Panc1 (cell line): ENCODE measurements at regions of chr1 and their contacts with region 1.

Region 1: GRCh38 chr1:159214149-159214760 is 9.6 kb downstream of the ACKR1 start:
- DNase-seq: peak; percentile 42
- ATAC-seq: peak; percentile 83; the same call in 1 of the 2 replicates
- H3K4me3 ChIP-seq: no peak overlapping the region
- H3K27ac ChIP-seq: no peak overlapping the region
- H3K4me1 ChIP-seq: no peaks in the 10 kb centered on the region
- H3K27me3 ChIP-seq: peaks cover 3% of the 10 kb centered on the region
- CTCF ChIP-seq: peak; percentile 96

Region 2: DNA sequence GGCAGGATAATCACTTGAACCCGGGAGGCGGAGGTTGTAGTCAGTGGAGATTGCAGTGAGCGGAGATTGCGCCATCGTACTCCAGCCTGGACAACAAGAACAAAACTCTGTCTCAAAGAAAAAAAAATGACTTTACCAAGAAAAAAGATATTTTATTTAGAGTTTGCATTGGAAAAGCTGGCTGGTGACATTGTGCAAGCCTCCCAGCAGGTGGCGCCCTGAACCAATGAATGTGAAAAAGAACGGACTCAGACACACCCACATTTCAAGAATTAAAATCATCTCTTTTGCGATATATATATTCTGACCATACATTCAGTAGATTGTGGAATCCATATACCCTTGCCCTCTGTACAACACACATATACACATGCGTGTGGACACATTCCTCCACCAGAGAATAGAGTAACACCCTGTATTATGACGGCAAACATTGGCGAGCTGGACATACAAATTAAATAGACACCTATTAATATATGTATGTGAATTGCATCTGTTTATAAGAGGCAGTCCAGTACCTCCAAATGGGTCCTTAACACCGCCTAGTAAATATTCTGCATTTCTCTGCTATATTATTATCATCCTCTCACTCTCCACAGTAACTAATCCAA is 81.9 kb before region 1 on chr1:
- CTCF ChIA-PET with region 1: interaction called, 12 read pairs
- POLR2A ChIA-PET with region 1: interaction called, 3 read pairs
- in situ Hi-C with region 1: no loop called
- intact Hi-C with region 1: loop called (anchors 2 kb)
- DNase-seq: peak; percentile 36
- ATAC-seq: peak; percentile 82
- H3K4me3 ChIP-seq: no peak overlapping the region
- H3K27ac ChIP-seq: no peak overlapping the region
- H3K4me1 ChIP-seq: no peaks in the 10 kb centered on the region
- H3K27me3 ChIP-seq: peaks cover 10% of the 10 kb centered on the region; the same call in 1 of the 2 replicates
- CTCF ChIP-seq: peak; percentile 91

Region 3: DNA sequence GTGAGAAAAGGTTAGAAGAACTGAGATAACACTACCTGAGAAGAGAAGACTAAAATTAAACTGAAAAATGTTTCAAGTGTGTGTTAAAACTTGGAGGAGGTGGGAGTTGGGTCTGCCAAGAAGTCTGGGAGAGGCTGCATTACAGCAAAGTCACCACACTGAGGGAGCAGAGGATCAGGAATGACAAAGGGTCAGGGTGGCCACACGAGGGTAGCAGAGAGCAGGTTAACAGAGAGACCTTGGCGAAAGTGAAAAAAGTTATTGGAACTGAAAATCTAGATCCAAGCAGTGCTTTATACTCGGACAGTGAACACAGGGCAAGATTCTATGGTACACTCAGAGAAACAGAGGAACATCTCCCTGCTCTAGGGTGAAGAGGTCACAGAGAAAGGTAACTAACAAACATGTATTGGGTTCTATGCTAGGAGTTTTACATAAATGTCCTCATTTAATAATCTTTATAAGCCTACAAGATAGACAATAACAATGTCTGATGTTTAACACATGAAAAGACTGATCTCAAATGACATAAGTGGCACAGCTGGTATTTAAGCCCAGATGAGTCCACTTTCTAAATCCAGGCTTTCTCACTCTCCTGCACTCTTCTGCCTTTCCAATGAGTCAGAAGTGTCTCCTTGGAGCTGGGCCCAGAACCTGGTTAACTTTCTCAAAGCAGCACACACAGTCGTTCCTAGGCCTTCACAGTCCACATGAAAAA is 53.1 kb before region 1 on chr1:
- CTCF ChIA-PET with region 1: interaction called, 4 read pairs
- POLR2A ChIA-PET with region 1: no interaction called
- in situ Hi-C with region 1: no loop called
- intact Hi-C with region 1: loop called (anchors 1 kb)
- DNase-seq: peak; percentile 69
- ATAC-seq: peak; percentile 99
- H3K4me3 ChIP-seq: no peak overlapping the region
- H3K27ac ChIP-seq: no peak overlapping the region
- H3K4me1 ChIP-seq: no peaks in the 10 kb centered on the region
- H3K27me3 ChIP-seq: peaks cover 8% of the 10 kb centered on the region
- CTCF ChIP-seq: peak; percentile 95

Region 4: DNA sequence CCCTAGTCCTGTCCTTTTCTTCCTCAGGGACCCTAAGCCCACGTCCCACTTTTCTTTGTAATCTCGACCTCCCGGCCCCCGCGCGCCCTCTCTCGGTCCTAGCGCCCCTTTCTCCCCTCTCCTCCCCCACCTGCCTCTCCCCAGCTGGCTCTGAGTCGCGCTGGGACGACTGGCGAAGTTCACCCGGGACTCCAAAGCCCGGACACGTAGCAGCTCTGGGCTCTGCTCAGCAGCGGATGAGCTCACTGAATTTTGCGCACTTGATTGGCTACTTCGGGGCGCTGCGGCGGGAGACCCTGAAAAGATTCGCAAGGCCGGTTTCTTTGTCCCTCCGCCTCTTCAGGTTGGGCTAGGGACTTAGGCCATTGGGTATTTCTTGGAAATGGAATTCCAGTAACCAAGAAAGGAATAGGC is 25.9 kb before region 1 on chr1:
- CTCF ChIA-PET with region 1: no interaction called
- POLR2A ChIA-PET with region 1: no interaction called
- in situ Hi-C with region 1: no loop called
- intact Hi-C with region 1: no loop called
- DNase-seq: no peak
- ATAC-seq: 0 out of 2 replicates have a peak, but pooled peaks have one; percentile 63
- H3K4me3 ChIP-seq: no peak overlapping the region
- H3K27ac ChIP-seq: no peak overlapping the region
- H3K4me1 ChIP-seq: no peaks in the 10 kb centered on the region
- H3K27me3 ChIP-seq: peaks cover 21% of the 10 kb centered on the region
- CTCF ChIP-seq: no peak